OCI-LY7 (cell line): ENCODE measurements at regions of chr3 and their contacts with region 1.

Region 1: DNA sequence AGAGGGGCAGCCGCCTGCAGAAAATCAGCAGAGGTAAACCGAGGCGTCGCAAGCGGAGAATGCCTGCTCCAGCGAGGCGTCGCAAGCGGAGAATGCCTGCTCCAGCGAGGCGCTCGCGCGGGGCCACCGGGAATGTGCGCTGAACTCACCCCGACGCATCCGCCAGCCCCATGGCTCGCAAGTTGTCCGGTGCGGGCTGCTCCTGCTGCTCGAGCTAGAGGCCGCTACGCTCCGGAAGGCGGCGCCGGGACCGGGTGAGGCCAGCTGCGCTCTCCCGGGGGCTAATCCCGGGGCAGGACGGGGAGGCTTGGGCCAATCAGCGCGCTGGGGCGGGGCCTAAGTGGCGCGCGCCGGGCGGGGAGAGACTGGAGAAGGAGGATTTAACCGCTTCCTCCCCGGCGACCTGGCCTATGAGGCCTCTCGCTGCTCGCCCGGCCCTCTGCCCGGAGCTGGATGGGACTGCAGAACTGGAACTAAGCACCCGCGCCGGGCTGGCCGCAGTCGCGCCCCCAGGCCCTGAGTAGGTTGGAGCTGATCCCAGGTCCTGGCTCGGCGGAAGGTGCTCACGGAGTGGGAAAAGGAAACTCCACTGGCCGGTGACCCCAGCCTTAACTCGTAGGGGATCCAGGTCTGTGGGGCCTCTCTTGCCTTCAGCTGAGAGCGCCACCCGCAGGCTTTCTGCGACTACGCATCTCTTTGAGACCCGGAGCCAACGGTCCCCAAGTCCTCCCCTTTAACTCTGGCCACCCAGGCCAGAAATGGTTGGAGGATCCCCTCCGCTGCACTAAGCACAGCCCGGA is at the start of gene SLC26A6:
- DNase-seq: peak; percentile 96
- H3K4me3 ChIP-seq: peak within 1 kb of the TSS; percentile 87
- H3K27ac ChIP-seq: peak within 1 kb of the TSS; percentile 52
- H3K4me1 ChIP-seq: peaks cover 27% of the 10 kb centered on the region
- CTCF ChIP-seq: peak; percentile 85
- total RNA-seq, gene SLC26A6: 28.4 and 42.1 TPM in 2 replicates

Region 2: GRCh38 chr3:48556793-48557626 is 78.4 kb before region 1 on chr3 and contains the start of gene PFKFB4:
- CTCF ChIA-PET with region 1: interaction called, 3 read pairs
- POLR2A ChIA-PET with region 1: no interaction called
- intact Hi-C with region 1: loop called (anchors 2 kb)
- DNase-seq: peak; percentile 99
- H3K4me3 ChIP-seq: peak within 1 kb of the TSS; percentile 77
- H3K27ac ChIP-seq: peak within 1 kb of the TSS; percentile 80
- H3K4me1 ChIP-seq: peaks cover 54% of the 10 kb centered on the region
- CTCF ChIP-seq: no peak
- total RNA-seq, gene PFKFB4: 3.8 and 5.0 TPM in 2 replicates

Region 3: DNA sequence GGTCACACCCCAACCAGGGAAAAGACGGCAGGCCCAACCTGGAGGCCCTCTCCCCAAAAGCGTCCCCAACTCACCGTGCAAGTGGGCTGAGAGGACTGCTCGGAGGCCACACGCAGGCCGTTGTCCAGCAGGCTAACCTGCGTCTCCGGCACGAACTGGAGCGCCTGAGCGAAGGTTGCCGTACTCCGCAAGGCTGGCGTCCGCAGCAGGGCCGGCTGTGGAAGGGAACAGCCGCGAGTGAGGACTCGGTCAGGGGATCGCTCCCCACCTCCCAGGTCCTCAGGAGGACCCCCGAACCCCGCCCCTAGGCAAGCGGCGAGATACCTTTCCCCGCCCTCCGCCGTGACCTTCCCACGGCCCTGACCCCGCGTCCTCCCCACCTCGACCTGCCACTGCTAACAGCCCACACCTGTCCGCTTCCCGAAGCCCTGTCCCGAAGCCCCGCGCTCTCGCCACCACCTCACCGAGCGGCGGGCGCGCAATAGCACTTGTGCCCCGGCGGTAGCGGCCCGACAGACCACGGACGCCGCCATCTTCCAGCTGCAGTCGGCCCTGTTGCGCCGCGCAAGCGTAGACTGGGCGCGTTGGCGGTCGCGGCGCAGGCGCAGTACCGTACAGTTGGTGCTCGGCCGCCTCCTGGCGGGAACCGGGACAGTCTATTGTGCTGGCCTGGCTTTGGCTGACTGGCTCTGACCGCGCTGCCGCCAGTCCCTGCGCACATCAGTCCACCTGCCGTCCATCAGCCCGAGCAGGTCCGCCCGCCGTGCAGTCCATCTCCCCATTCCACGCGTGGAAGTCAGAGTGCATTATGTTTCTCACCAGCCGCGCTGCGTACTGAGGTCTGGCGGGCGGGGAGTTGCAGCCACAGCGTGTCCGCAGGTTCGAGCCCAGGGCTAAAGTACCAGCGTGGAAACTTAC is 26.1 kb before region 1 on chr3 and contains the start of gene UQCRC1:
- CTCF ChIA-PET with region 1: no interaction called
- POLR2A ChIA-PET with region 1: interaction called, 3 read pairs
- intact Hi-C with region 1: loop called (anchors 1 kb)
- DNase-seq: peak; percentile 95
- H3K4me3 ChIP-seq: peak within 1 kb of the TSS; percentile 94
- H3K27ac ChIP-seq: peak within 1 kb of the TSS; percentile 53
- H3K4me1 ChIP-seq: peaks cover 15% of the 10 kb centered on the region
- CTCF ChIP-seq: peak; percentile 71
- total RNA-seq, gene UQCRC1: 125 and 168 TPM in 2 replicates

Region 4: DNA sequence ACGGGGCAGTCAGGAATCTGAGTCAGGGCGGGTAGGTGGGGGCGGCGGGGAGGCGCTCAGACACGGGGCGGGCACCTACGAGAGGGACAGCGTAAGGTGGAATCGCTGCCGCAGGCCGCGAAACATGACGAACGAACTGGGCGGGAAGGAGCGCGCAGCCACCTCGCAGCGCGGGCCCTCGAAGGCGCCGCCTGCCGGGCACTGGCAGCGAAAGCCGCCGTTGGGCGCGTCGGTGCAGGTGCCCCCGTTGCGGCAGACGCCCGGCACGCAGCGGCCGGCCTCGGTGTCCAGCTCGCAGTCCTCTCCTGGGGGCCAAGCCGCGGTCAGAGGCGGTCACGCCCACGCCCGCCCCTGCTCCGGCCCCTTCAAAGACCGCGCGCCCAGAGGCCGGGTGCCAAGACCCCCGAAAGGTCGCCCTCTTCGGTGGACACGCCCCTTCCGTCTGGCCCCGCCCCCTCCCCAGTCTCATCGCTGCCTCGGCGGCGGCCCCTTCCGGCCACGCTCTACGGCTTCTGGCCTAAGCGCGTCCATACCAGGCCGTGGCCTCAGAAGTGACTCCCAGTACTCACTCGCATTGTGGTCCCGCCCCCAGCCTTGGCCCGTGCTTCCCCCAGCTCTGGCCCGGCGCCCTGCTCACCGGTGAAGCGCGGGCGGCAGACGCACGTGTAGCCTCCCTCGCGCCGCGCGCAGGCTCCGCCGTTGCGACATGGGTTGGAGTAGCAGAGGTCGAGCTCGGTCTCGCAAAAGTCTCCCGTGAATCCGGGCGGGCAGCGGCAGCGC is 20.8 kb after region 1 on chr3:
- CTCF ChIA-PET with region 1: interaction called, 6 read pairs
- POLR2A ChIA-PET with region 1: interaction called, 3 read pairs
- intact Hi-C with region 1: loop called (anchors 1 kb)
- DNase-seq: peak; percentile 87
- H3K4me3 ChIP-seq: peak overlapping the region; percentile 67
- H3K27ac ChIP-seq: no peak overlapping the region
- H3K4me1 ChIP-seq: peaks cover 4% of the 10 kb centered on the region
- CTCF ChIP-seq: peak; percentile 74

Region 5: GRCh38 chr3:48663415-48664312 is 28.2 kb after region 1 on chr3:
- CTCF ChIA-PET with region 1: interaction called, 10 read pairs
- POLR2A ChIA-PET with region 1: interaction called, 3 read pairs
- intact Hi-C with region 1: loop called (anchors 1 kb)
- DNase-seq: peak; percentile 99
- H3K4me3 ChIP-seq: peak overlapping the region; percentile 80
- H3K27ac ChIP-seq: peak overlapping the region; percentile 79
- H3K4me1 ChIP-seq: no peaks in the 10 kb centered on the region
- CTCF ChIP-seq: peak; percentile 90

Region 6: DNA sequence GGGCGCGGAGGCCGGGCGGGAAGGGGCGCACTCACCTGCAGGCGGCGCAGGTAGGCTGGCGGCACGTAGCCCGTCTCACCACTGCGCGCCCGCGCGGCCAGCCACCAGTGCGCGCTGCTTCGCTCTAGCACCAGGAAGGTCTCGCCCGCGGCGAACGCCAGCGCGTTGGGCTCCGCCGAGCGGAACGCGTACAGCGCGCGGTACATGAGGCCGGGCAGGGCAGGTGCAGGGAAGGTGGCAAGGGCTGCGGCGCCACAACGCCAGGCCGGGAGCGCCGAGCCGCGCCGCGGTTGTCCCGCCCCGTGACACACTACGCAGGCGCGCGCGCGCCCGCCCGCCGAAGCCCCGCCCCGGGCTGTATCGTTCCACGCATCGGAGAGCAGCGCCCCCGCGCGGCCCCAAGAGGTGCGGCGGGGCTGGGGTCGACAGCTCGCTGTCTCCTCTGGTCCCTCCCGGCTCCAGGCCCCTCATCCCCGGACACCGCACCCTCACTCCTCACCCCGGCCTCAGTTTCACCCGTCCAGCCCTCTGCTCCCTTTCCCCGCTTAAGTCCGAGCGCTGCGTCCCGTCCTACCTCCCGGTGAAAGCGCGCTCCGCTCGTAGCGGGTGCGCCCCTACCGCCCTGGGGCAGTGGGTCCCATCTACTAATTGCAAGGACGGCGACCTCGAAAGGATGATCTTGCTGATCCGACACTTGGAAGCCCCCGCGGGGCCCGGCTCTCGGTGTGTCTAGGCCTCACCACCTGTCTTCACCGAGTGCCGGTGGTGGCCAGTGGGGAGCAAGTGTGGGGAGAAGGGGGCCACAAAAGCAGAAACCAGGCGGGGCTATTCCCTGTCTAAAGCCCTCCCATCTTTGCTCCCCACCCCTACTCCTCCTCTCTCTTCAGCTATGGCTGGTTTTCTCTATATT is 50.4 kb after region 1 on chr3 and contains the start of gene NCKIPSD:
- CTCF ChIA-PET with region 1: interaction called, 3 read pairs
- POLR2A ChIA-PET with region 1: no interaction called
- intact Hi-C with region 1: loop called (anchors 1 kb)
- DNase-seq: peak; percentile 94
- H3K4me3 ChIP-seq: peak within 1 kb of the TSS; percentile 84
- H3K27ac ChIP-seq: peak within 1 kb of the TSS; percentile 75
- H3K4me1 ChIP-seq: peaks cover 33% of the 10 kb centered on the region
- CTCF ChIP-seq: peak; percentile 81
- total RNA-seq, gene NCKIPSD: 34.8 and 42.1 TPM in 2 replicates

Region 7: DNA sequence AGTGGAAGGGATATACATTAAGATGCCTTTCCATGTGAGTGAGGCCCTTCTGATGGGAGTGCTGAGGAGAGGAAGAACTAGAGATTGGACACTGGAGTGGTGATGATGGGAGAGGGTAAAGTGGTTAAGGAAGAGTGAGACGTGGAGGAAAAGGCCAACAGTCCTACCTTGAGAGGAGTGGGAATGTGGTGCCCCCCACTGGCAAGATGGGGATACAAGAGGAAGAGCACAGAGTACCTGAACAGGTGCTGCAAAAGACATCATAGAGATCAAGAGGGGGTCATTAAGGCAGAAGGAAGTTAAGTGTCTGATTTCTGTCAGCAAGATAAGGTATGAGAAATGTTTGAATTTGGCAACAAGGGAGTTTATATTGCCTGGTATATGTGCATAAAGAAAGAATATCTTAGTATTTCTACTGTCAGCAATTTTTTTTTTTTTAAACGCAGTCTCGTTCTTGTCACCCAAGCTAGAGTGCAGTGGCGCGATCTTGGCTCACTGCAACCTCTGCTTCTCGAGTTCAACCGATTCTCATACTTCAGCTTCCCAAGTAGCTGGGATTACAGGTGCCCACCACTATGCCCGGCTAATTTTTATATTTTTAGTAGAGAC is 317.2 kb after region 1 on chr3:
- CTCF ChIA-PET with region 1: no interaction called
- POLR2A ChIA-PET with region 1: no interaction called
- intact Hi-C with region 1: no loop called
- DNase-seq: peak; percentile 47
- H3K4me3 ChIP-seq: no peak overlapping the region
- H3K27ac ChIP-seq: no peak overlapping the region
- H3K4me1 ChIP-seq: no peaks in the 10 kb centered on the region
- CTCF ChIP-seq: peak; percentile 79

Region 8: GRCh38 chr3:50211930-50212329 is 1576.5 kb after region 1 on chr3:
- CTCF ChIA-PET with region 1: no interaction called
- POLR2A ChIA-PET with region 1: no interaction called
- intact Hi-C with region 1: no loop called
- DNase-seq: no peak
- H3K4me3 ChIP-seq: no peak overlapping the region
- H3K27ac ChIP-seq: no peak overlapping the region
- H3K4me1 ChIP-seq: no peaks in the 10 kb centered on the region
- CTCF ChIP-seq: no peak